Ovary (tissue), 10 donors: ENCODE measurements at regions of chr15 and their contacts with region 1.

Region 1: GRCh38 chr15:93932164-93932776 is 299.1 kb upstream of the MCTP2 start:
- DNase-seq: no peak
- H3K4me3 ChIP-seq: no peak overlapping the region
- H3K27ac ChIP-seq: no peak overlapping the region
- H3K4me1 ChIP-seq: peaks cover 2% of the 10 kb centered on the region
- H3K27me3 ChIP-seq: no peaks in the 10 kb centered on the region
- CTCF ChIP-seq: no peak
- EP300 ChIP-seq: no peak
- POLR2A ChIP-seq: no peak

Region 2: DNA sequence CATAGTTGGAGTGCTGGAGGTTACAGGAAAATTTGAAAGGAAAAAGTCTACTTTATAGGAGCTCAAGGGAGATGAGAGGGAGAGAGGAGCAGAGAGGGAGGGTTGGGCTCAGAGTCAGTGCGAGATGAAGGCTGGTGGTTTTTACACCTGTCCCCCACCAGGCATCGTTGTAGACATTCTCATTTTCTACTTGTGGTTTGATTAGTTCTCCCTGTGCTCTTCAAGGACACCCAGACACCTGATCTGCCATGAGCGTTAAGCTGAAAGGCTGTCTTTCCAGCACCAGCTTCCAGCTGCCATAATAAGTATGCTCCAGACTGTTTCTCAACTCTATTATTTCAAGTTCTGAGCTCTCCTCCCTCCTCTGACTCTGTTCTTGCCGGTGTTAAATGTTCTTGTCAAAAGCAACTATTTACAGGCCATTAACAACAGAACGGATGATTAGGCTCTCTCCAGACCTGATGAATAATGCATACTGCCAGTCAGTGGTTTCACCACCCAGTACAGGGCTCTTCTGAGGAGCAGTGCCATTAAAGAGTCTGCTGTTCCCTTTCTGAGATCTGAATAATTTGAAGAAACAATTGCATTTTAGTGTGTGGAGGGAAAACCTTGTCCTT is 215.5 kb before region 1 on chr15:
- intact Hi-C with region 1: loop called in 1 of 4 experiments (anchors 5 kb)
- DNase-seq: no peak
- H3K4me3 ChIP-seq: no peak overlapping the region
- H3K27ac ChIP-seq: no peak overlapping the region
- H3K4me1 ChIP-seq: no peaks in the 10 kb centered on the region
- H3K27me3 ChIP-seq: no peaks in the 10 kb centered on the region
- CTCF ChIP-seq: no peak
- EP300 ChIP-seq: no peak
- POLR2A ChIP-seq: no peak